Calu3 (cell line): ENCODE measurements at regions of chr7 and their contacts with region 1.

Region 1: DNA sequence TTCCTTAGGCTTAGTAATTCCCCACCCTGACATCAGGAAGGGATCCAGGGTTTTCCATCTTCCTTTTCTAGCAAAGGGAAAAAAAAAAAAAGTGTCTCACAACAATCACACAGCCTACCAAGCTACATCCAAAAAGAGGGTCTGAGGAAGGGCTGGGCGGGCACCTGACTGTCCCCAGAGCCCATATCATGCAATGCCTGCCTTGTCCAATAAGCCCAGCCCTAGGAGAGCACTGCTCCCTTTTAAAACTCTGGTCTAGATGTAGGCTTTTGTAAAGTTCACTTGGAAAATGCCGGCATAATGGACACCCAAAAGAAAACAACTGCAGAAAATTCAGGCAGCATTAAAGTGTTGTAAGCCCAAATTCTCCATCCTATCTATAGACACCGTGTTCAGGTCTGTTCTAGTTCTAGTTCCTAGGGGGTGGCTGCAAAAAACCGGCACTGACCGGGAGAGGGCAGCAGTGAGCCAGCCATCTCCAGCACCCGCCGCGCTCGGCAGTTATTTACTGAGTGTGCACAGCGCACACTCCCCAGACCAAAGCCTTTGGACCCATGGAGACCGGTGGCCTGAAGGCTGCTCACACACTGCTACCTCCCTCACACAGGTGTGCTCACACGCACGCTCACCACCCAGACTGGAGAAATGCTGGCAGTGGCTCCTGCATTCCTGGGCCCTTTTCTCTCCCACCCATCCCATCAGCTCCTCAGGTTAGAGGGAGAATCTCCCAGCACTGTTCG is 48.7 kb downstream of the PODXL start:
- DNase-seq: peak; percentile 87
- H3K4me3 Mint-ChIP-seq: no peak overlapping the region
- H3K27ac Mint-ChIP-seq: no peak overlapping the region
- H3K4me1 Mint-ChIP-seq: peaks cover under 1% of the 10 kb centered on the region
- H3K27me3 Mint-ChIP-seq: no peaks in the 10 kb centered on the region
- CTCF ChIP-seq: peak; percentile 80

Region 2: DNA sequence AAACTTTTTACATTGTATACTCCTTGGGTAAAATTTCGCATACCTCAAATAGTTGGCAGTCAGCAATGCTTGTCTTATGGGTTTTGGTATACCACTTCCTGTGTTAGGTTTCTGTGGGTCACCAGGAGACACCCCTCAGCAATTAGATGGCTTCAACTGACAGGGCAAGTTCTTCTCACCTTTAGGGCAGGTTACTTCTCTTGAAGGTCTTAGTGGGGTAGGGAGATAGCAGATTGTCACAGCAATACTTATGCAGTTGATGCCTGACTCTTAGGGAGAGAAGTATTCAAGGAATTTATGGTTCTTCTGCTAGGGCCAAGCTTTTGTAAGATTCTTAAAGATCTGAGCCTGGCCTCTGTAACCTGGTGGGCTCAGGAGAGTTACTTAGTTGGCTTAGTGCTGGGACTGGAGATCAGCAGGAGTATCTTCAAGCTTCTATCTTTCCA is 137.2 kb before region 1 on chr7:
- CTCF ChIA-PET with region 1: no interaction called
- intact Hi-C with region 1: no loop called
- DNase-seq: no peak
- H3K4me3 Mint-ChIP-seq: no peak overlapping the region
- H3K27ac Mint-ChIP-seq: no peak overlapping the region
- H3K4me1 Mint-ChIP-seq: peaks cover 33% of the 10 kb centered on the region
- H3K27me3 Mint-ChIP-seq: no peaks in the 10 kb centered on the region
- CTCF ChIP-seq: no peak

Region 3: DNA sequence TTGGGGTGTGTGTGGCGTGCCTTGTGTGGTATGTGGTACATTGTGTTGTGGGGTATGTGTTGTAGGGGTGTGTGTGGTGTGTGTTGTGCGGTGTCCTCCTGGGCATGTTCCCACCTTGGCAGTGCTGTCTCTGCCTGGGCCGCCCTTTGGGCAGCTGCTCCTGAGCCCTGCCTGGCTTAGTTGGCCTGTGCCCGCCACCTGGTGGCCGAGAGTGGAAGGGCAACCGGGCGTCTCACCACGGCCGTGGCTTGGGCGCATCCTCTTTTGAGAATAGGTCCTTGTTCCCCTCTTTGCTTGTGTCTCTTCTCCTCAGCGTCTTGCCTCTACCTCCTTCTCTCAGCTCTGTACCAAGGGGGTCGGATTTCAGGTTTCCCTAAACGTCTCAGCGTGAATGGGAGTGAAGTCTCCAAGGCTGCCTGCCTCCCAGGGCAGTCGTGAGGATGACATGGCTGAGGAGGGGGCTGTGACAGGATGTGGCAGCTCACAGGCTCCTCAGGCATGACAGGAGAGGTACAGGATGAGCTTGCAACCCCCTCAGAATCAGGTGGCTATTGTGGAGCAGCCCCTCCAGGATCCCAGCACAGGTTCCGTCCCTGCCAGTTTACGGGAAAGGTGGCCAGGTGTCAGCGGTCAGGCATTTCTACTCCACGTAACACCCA is 147.0 kb after region 1 on chr7:
- CTCF ChIA-PET with region 1: interaction called, 4 read pairs
- intact Hi-C with region 1: loop called (anchors 1 kb)
- DNase-seq: peak; percentile 92
- H3K4me3 Mint-ChIP-seq: no peak overlapping the region
- H3K27ac Mint-ChIP-seq: no peak overlapping the region
- H3K4me1 Mint-ChIP-seq: peaks cover 17% of the 10 kb centered on the region
- H3K27me3 Mint-ChIP-seq: no peaks in the 10 kb centered on the region
- CTCF ChIP-seq: peak; percentile 94